ENCODE measurements at regions of chr14 and their contacts with region 1.

Region 1: DNA sequence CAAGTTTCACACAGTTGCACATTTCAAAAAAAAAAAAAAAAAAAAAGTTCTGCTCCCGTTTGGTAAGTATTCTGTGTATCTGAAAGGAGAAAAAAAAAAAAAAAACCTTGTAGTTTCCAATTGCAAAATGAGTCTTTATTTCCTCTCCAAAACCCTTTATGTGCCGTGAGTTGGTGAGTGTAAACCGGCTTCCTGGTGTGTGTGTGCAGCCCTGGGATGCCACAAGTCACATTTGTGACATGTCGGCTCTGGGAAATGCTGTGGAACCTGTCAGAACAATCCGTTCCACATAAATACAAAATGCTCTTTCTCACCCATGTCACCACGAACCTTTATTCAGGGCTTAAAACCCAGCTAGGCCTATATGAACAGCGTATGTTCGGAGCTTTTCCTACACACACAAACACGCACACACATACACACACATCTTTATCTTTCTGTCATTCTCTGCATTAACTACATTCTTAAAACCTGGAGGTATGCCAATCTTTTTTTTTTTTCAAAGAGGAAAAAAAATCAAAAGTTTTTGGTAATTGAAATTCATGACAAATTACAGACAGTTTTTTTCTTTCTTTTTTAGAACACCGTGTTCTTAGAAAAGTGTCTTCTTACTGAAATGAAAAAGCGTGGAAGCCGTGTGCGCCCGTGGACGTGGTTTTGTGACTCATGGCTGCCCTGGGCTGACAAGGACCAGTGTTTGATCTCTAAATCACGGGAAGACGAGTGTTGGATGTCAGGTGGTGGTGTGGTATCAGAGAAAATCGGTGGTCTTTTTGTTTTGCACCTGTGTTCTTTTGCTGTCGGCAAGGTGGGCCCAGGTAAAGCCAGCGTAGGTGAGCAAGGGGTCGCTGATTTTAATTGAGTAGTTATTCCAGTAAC is 612.0 kb downstream of the VRK1 start:
- DNase-seq: peak; percentile 75
- H3K4me3 Mint-ChIP-seq: peak overlapping the region; percentile 49
- H3K27ac Mint-ChIP-seq: peak overlapping the region; percentile 92
- H3K4me1 Mint-ChIP-seq: peaks cover 38% of the 10 kb centered on the region
- H3K27me3 Mint-ChIP-seq: peaks cover 5% of the 10 kb centered on the region

Region 2: GRCh38 chr14:97306760-97307246 is 102.4 kb before region 1 on chr14:
- CTCF ChIA-PET with region 1: interaction called, 7 read pairs
- POLR2A ChIA-PET with region 1: interaction called, 9 read pairs
- intact Hi-C with region 1: loop called (anchors 1 kb)
- DNase-seq: peak; percentile 39
- H3K4me3 Mint-ChIP-seq: no peak overlapping the region
- H3K27ac Mint-ChIP-seq: peak overlapping the region; percentile 92
- H3K4me1 Mint-ChIP-seq: peaks cover 29% of the 10 kb centered on the region
- H3K27me3 Mint-ChIP-seq: no peaks in the 10 kb centered on the region

Region 3: DNA sequence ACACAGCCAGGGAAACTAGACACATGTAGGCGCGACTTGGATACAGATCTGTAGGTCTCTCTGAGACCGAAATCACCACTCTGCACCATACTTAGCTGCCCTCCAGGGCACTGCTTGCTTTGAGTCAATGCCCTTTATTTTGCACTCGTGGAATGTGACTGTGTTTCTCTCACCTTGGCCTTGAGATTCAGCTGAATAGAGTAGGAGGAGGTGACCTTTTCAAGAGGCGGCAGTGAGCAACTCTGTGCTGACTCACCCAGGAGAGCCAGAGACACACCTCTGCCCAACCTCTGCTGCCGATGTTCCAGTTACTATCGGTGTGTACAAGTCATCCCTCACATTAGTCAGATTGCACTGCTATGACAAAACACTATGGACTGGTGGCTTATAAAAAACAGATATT is 28.6 kb before region 1 on chr14:
- CTCF ChIA-PET with region 1: interaction called, 3 read pairs
- POLR2A ChIA-PET with region 1: interaction called, 4 read pairs
- intact Hi-C with region 1: loop called (anchors 1 kb)
- DNase-seq: peak; percentile 89
- H3K4me3 Mint-ChIP-seq: no peak overlapping the region
- H3K27ac Mint-ChIP-seq: peak overlapping the region; percentile 78
- H3K4me1 Mint-ChIP-seq: peaks cover 59% of the 10 kb centered on the region
- H3K27me3 Mint-ChIP-seq: no peaks in the 10 kb centered on the region

Region 4: DNA sequence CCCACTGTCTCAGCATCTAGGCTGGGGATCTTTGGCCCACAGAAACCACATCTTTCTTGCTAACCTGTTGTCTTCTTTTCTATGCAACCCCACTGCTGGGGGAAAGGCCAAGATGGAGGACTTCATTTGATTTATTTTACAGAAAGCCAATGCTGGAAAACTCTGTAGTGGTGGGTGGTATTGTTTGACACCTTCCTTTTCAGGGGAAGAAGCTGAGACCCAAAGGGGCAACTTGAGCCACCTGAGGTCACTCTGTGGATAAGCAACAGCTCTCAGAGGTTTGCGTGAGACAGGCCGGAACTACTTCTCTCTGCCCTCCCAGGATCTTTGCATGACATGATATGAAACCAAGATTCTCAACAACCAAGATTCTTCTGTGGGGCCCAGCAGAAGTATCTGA is 33.2 kb after region 1 on chr14:
- CTCF ChIA-PET with region 1: no interaction called
- POLR2A ChIA-PET with region 1: interaction called, 4 read pairs
- intact Hi-C with region 1: loop called (anchors 1 kb)
- DNase-seq: peak; percentile 60
- H3K4me3 Mint-ChIP-seq: peak overlapping the region; percentile 21
- H3K27ac Mint-ChIP-seq: peak overlapping the region; percentile 96
- H3K4me1 Mint-ChIP-seq: peaks cover 25% of the 10 kb centered on the region
- H3K27me3 Mint-ChIP-seq: no peaks in the 10 kb centered on the region

Region 5: DNA sequence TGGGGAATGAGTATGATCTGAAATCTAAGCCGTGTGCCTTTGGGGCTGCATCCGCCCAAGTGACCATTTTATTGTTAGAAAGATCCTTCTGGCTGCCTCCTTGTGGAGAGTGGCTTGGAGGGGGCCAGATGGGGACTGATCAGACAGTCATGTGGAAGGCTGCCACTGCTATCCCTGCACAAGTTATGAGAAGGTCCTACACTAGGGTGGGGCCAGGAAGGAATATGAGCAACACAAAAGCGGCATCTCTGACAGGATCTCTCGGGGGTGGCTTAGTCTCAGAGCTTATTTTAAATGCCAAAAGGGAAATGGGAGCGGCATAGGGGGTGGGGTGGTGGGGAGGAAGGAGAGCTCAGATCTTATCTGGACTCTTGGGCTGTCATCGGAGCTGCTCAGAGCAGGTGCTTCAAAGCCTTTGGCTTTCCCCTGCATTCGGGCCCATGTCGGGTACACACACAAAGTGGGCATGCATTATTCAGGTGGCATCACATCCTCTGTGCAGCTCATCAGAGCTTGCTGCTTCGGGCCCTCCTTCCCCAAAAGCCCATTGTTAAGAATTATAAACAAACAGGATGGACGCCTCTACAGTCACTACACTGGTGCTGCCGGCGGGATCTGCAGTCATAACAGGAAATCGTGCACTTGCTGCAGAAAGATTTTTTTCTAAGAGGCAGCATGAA is 193.4 kb after region 1 on chr14:
- CTCF ChIA-PET with region 1: no interaction called
- POLR2A ChIA-PET with region 1: no interaction called
- intact Hi-C with region 1: loop called (anchors 5 kb)
- DNase-seq: peak; percentile 80
- H3K4me3 Mint-ChIP-seq: no peak overlapping the region
- H3K27ac Mint-ChIP-seq: no peak overlapping the region
- H3K4me1 Mint-ChIP-seq: peaks cover 29% of the 10 kb centered on the region
- H3K27me3 Mint-ChIP-seq: no peaks in the 10 kb centered on the region

Measured in activated CD4-positive, alpha-beta memory T cell treated with anti-CD3 and anti-CD28 coated beads for 36 hours (primary cell).